Activated CD8-positive, alpha-beta T cell treated with anti-CD3 and anti-CD28 coated beads for 36 hours (primary cell): ENCODE measurements at regions of chr14 and their contacts with region 1.

Region 1: GRCh38 chr14:51239813-51240803 is at the start of gene TMX1:
- DNase-seq: peak; percentile 95
- ATAC-seq: peak; percentile 95
- H3K4me3 Mint-ChIP-seq: no peak within 1 kb of the TSS
- H3K27ac Mint-ChIP-seq: no peak within 1 kb of the TSS
- H3K4me1 Mint-ChIP-seq: peaks cover 46% of the 10 kb centered on the region
- H3K27me3 Mint-ChIP-seq: no peaks in the 10 kb centered on the region
- CTCF ChIP-seq: no peak
- total RNA-seq, gene TMX1: 53.6 to 61.1 TPM

Region 2: DNA sequence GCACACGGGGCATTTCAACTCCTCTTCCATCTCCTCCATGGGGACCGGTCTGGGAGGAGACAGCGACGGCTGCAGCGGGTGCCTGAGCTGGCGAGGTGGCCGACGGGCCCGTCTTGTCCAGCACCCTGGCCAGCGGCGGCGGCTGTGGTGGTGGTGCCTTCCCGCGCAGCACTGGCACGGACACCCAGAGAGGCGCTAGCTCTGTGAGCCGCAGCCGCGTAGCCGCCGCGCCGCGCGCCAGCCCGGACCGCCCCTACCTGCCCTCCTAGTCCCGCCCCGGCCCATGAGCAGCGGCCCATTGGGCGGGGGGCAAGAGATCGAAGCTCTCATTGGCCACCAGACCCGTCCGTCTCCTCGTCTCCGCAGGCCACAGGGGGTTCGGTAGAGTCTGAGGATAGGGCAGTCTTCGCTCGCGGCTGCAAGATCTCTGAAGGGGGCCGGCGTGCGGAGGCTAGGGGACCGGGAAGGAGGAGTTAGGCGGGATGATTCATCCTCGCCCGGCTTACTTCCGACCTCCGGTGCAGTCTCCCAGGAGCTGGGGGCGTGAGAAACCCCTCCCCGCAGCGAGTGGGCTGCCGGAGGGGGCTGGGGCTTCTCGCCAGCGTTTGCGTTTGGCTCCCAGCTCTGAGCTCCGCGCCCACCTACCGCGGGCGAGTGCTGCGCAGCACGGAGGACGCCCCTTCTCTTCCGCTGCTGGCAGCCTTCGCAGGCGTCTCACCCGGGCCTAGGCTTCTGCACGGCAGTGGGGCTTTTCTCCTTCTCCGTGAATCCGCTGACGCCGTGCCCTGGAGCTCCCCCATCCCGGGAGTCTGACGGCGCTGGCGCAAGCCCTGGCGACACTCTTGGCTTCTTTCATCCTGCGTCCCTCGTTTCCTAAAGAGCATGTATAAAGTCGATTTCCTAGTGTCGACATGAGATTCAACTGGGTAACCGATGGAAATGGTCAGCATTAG is 144.9 kb before region 1 on chr14 and contains the start of gene TRIM9:
- CTCF ChIA-PET with region 1: interaction called, 3 read pairs
- POLR2A ChIA-PET with region 1: interaction called, 13 read pairs
- intact Hi-C with region 1: loop called (anchors 10 kb)
- DNase-seq: peak; percentile 98
- ATAC-seq: peak; percentile 95
- H3K4me3 Mint-ChIP-seq: peak within 1 kb of the TSS; percentile 87
- H3K27ac Mint-ChIP-seq: peak within 1 kb of the TSS; percentile 89
- H3K4me1 Mint-ChIP-seq: peaks cover 17% of the 10 kb centered on the region
- H3K27me3 Mint-ChIP-seq: peaks cover 8% of the 10 kb centered on the region
- CTCF ChIP-seq: no peak
- total RNA-seq, gene TRIM9: 6.5 to 7.2 TPM

Region 3: DNA sequence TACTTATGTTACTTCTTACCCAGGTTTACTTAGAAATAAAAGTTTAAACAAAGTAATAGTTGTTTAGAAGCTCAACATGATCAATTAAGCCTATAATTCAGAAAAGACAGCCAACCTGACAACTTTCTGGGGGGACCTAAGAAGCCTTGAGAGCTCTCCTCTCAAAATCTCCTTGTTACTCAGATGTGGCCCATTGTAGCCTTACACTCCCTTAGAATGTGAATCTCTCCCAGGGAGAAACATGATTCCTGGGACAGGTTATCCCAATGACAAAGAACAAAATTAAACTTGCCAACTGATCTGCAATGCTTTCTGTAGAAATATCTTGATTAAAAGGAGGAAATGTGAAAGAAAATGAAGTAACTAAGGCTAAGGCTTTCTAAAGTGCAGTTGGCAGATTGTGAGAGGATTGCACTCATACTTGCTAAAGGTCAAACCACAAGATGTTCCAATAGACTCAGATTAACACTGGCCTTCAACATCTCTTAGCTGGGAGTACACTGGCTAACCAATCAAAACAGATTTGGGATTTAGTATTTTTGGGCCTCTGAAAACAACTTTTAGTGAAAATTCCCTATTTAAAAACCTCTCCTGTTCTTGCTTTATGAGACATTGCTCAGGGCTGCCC is 72.4 kb before region 1 on chr14:
- CTCF ChIA-PET with region 1: no interaction called
- POLR2A ChIA-PET with region 1: no interaction called
- intact Hi-C with region 1: no loop called
- DNase-seq: no peak
- ATAC-seq: peak; percentile 94
- H3K4me3 Mint-ChIP-seq: no peak overlapping the region
- H3K27ac Mint-ChIP-seq: peak overlapping the region; percentile 86
- H3K4me1 Mint-ChIP-seq: peaks cover 18% of the 10 kb centered on the region
- H3K27me3 Mint-ChIP-seq: no peaks in the 10 kb centered on the region
- CTCF ChIP-seq: no peak